CD4-positive, alpha-beta memory T cell (primary cell): ENCODE measurements at regions of chr20 and their contacts with region 1.

Region 1: DNA sequence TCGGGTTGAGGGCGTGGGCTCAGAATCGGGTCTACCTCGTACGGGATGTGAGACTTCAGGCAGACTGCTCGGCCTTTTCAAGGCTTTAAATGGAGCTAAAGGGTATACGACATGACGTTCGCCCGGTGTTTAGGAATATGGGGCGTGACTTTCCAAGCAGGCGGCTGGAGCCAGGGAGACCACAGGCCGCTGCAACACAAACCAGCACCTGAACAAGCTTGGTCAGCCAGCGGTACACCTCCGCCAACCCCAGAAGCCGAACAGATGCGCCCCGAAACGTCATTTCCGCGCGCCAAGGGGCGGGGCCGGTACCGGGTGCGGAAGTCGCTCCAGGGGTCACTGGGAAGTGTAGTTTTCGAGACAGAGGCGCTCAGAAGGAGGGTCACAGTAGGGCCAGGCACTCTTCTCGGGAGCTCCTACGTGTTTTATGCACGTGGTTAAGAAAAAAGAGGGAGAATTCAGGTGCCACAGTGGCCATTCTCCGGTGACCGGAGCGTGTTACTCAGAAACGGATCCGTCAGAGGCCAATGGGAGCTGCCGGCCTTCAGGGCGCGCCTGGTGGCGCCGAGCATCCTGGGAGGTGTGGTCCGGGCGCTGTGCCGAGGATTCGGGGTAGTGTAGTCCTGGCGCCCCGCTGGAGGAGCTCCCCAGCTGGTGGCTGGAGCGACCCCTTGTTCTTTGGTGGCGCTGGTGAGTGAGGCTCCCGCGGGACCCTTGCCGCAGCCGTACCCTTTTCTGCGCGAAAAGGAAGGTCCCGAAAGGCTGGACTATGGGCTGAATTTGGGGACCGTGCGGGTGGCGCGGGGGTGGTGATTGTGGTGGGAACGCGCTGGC is at the start of gene ZNF133:
- DNase-seq: peak; percentile 96 to 99 (median 97)
- H3K4me3 ChIP-seq: peak within 1 kb of the TSS; percentile 87 to 99
- H3K4me3 Mint-ChIP-seq: peak within 1 kb of the TSS; percentile 92 to 99 (median 98)
- H3K27ac ChIP-seq: peak within 1 kb of the TSS; percentile 95
- H3K27ac Mint-ChIP-seq: peak within 1 kb of the TSS; percentile 98 to 100 (median 100)
- H3K4me1 ChIP-seq: peaks cover 19% of the 10 kb centered on the region
- H3K4me1 Mint-ChIP-seq: peaks cover 19 to 34% (median 25%) of the 10 kb centered on the region in 4 donors
- H3K27me3 ChIP-seq: peaks cover 11% of the 10 kb centered on the region
- H3K27me3 Mint-ChIP-seq: peaks cover 11 to 19% of the 10 kb centered on the region in 2 donors
- total RNA-seq, gene ZNF133: 9.1 to 11.8 TPM

Region 2: GRCh38 chr20:16573001-16573965 is 1714.8 kb before region 1 on chr20 and contains the start of gene KIF16B:
- CTCF ChIA-PET with region 1: no interaction called
- POLR2A ChIA-PET with region 1: no interaction called
- intact Hi-C with region 1: loop called (anchors 10 kb)
- DNase-seq: peak; percentile 71 to 80 (median 79)
- H3K4me3 ChIP-seq: peak within 1 kb of the TSS; percentile 57 to 93
- H3K4me3 Mint-ChIP-seq: peak within 1 kb of the TSS; percentile 89 to 95 (median 93)
- H3K27ac ChIP-seq: peak within 1 kb of the TSS; percentile 61
- H3K27ac Mint-ChIP-seq: peak within 1 kb of the TSS; percentile 71 to 89 (median 84)
- H3K4me1 ChIP-seq: peaks cover 35% of the 10 kb centered on the region
- H3K4me1 Mint-ChIP-seq: peaks cover 21 to 60% (median 42%) of the 10 kb centered on the region in 4 donors
- H3K27me3 ChIP-seq: no peaks in the 10 kb centered on the region
- H3K27me3 Mint-ChIP-seq: no peaks in the 10 kb centered on the region
- total RNA-seq, gene KIF16B: 12.0 TPM

Region 3: GRCh38 chr20:18137412-18138265 is 150.5 kb before region 1 on chr20 and contains the starts of genes KAT14 and PET117:
- CTCF ChIA-PET with region 1: interaction called, 3 read pairs
- POLR2A ChIA-PET with region 1: interaction called, 64 read pairs
- intact Hi-C with region 1: no loop called
- DNase-seq: peak; percentile 89 to 95 (median 92)
- H3K4me3 ChIP-seq: peak within 1 kb of the TSS; percentile 71 to 87
- H3K4me3 Mint-ChIP-seq: peak within 1 kb of the TSS; percentile 88 to 94 (median 90)
- H3K27ac ChIP-seq: peak within 1 kb of the TSS; percentile 78
- H3K27ac Mint-ChIP-seq: peak within 1 kb of the TSS; percentile 89 to 96 (median 92)
- H3K4me1 ChIP-seq: peaks cover 34% of the 10 kb centered on the region
- H3K4me1 Mint-ChIP-seq: peaks cover 22 to 43% (median 30%) of the 10 kb centered on the region in 4 donors
- H3K27me3 ChIP-seq: no peaks in the 10 kb centered on the region
- H3K27me3 Mint-ChIP-seq: no peaks in the 10 kb centered on the region
- total RNA-seq, gene KAT14: 22.4 to 24.0 TPM
- total RNA-seq, gene PET117: 14.1 to 15.0 TPM

Region 4: GRCh38 chr20:18466894-18467730 is 179.0 kb after region 1 on chr20 and contains the starts of genes DZANK1 and POLR3F:
- CTCF ChIA-PET with region 1: no interaction called
- POLR2A ChIA-PET with region 1: interaction called, 33 read pairs
- intact Hi-C with region 1: loop called (anchors 1 kb)
- DNase-seq: peak; percentile 92 to 94 (median 93)
- H3K4me3 ChIP-seq: peak within 1 kb of the TSS; percentile 94 to 99
- H3K4me3 Mint-ChIP-seq: peak within 1 kb of the TSS; percentile 90 to 100 (median 96)
- H3K27ac ChIP-seq: peak within 1 kb of the TSS; percentile 78
- H3K27ac Mint-ChIP-seq: peak within 1 kb of the TSS; percentile 92 to 100 (median 99)
- H3K4me1 ChIP-seq: peaks cover 18% of the 10 kb centered on the region
- H3K4me1 Mint-ChIP-seq: peaks cover 9 to 37% (median 23%) of the 10 kb centered on the region in 4 donors
- H3K27me3 ChIP-seq: no peaks in the 10 kb centered on the region
- H3K27me3 Mint-ChIP-seq: no peaks in the 10 kb centered on the region
- total RNA-seq, gene DZANK1: 2.7 to 3.0 TPM
- total RNA-seq, gene POLR3F: 7.8 to 9.1 TPM

Region 5: DNA sequence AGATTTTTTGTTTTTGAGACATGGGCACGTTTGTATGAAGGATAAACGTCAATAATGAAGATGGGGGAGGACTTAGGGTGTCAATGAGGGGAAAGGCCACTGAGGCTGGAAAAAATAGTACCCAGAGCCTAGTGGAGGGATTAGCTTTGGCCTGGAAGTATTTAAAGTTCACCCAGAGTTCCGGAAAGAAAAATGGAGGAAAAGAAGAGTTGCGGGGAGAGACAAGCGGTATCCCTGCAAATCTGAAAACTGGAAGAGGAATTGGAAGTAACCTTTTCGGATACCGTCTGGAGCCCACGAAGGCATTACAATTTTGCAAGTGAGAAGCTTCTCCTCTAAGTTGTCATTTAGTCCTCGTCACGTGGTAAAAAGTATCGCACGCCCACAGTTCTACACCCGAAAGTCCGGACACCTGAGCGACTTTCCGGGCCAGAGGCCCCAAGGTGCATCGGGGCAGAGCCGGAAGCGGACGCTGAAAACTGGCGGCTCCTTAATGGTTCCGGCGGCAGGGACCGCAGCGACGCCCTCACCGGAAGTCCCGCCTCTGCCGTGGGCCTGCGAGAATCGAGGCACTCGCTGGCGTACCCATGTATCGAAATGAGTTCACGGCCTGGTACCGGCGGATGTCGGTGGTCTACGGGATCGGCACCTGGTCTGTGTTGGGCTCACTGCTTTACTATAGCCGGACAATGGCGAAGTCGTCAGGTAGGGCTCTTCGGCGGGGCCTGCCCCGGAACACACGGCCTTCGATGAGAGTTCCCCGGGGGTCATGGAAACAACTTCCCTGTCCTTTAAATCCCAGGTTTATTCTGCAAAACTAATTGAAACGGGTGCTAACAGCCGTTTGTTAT is 279.0 kb after region 1 on chr20 and contains the start of gene SMIM26:
- CTCF ChIA-PET with region 1: no interaction called
- POLR2A ChIA-PET with region 1: interaction called, 5 read pairs
- intact Hi-C with region 1: loop called (anchors 1 kb)
- DNase-seq: peak; percentile 92 to 94 (median 93)
- H3K4me3 ChIP-seq: peak within 1 kb of the TSS; percentile 77 to 78
- H3K4me3 Mint-ChIP-seq: peak within 1 kb of the TSS; percentile 94 to 99 (median 97)
- H3K27ac ChIP-seq: peak within 1 kb of the TSS; percentile 96
- H3K27ac Mint-ChIP-seq: peak within 1 kb of the TSS; percentile 93 to 100 (median 99)
- H3K4me1 ChIP-seq: peaks cover 13% of the 10 kb centered on the region
- H3K4me1 Mint-ChIP-seq: peaks cover 9 to 34% (median 14%) of the 10 kb centered on the region in 4 donors
- H3K27me3 ChIP-seq: no peaks in the 10 kb centered on the region
- H3K27me3 Mint-ChIP-seq: no peaks in the 10 kb centered on the region
- total RNA-seq, gene SMIM26: 60.2 to 64.2 TPM

Region 6: GRCh38 chr20:18793625-18794427 is 505.7 kb after region 1 on chr20:
- CTCF ChIA-PET with region 1: interaction called, 4 read pairs
- POLR2A ChIA-PET with region 1: interaction called, 15 read pairs
- intact Hi-C with region 1: loop called (anchors 1 kb)
- DNase-seq: peak; percentile 85 to 94 (median 89)
- H3K4me3 ChIP-seq: peak overlapping the region; percentile 36 to 80
- H3K4me3 Mint-ChIP-seq: peak overlapping the region; percentile 94 to 98 (median 96)
- H3K27ac ChIP-seq: peak overlapping the region; percentile 85
- H3K27ac Mint-ChIP-seq: peak overlapping the region; percentile 92 to 100 (median 100)
- H3K4me1 ChIP-seq: peaks cover 12% of the 10 kb centered on the region
- H3K4me1 Mint-ChIP-seq: peaks cover 5 to 17% (median 11%) of the 10 kb centered on the region in 4 donors
- H3K27me3 ChIP-seq: peaks cover 5% of the 10 kb centered on the region
- H3K27me3 Mint-ChIP-seq: peaks cover 15 to 17% of the 10 kb centered on the region in 2 donors